ENCODE measurements at regions of chr1 and their contacts with region 1.

Region 1: GRCh38 chr1:199221371-199222150 is 582.7 kb downstream of the PTPRC start:
- DNase-seq: no peak
- H3K4me3 Mint-ChIP-seq: no peak overlapping the region
- H3K27ac Mint-ChIP-seq: no peak overlapping the region
- H3K4me1 Mint-ChIP-seq: peaks cover 9% of the 10 kb centered on the region
- H3K27me3 Mint-ChIP-seq: no peaks in the 10 kb centered on the region

Region 2: DNA sequence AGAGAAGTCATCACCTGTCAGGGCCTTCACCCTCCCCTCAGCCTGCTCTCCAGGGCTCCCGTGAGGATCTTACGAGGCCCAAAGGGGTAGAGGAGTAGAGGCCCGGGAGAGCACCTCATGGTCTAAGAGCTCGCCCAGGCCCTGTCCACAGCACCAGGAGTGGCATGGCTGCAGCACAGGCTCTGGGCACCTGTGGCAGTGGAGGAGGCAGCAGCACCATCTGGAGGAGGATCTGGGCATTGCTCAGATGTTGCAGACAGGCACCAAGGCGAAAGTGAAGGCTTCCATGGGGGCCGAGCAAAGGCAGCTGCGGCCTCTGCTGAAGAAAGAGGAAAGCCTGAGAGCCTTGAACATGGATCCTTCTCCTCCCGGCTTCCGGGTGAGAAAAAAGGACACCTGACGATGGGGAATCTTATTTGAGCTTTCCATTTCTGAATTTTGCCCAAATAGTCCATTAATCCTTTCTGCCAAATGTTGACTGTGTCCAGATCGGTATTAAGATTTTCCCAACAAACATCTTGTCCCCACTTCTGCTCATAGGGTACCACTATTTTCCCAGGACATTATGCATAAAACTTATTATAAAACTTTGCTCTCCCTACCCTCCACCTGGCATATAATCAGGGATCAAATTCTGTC is 22.0 kb after region 1 on chr1:
- CTCF ChIA-PET with region 1: interaction called, 15 read pairs
- DNase-seq: peak; percentile 79
- H3K4me3 Mint-ChIP-seq: no peak overlapping the region
- H3K27ac Mint-ChIP-seq: no peak overlapping the region
- H3K4me1 Mint-ChIP-seq: no peaks in the 10 kb centered on the region
- H3K27me3 Mint-ChIP-seq: peaks cover 11% of the 10 kb centered on the region

Region 3: DNA sequence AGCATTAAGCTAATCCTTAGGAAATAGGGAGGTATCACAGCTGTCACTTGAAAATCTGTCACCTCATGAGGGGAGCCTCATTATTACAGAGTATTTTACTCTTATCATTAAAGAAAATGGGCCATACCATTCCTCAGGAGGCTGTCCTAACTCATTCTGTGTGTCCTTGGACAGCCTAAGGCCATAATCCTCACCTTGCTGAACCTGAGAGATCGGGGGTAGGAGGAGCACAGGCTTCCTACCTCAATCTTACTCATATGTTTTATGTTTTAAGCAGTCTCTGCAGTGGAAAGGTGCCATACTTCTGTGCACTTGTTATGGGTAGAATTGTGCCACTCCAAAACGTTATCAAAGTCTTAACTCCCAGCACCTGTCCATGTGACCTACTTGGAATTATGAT is 39.2 kb after region 1 on chr1:
- CTCF ChIA-PET with region 1: no interaction called
- DNase-seq: no peak
- H3K4me3 Mint-ChIP-seq: no peak overlapping the region
- H3K27ac Mint-ChIP-seq: no peak overlapping the region
- H3K4me1 Mint-ChIP-seq: no peaks in the 10 kb centered on the region
- H3K27me3 Mint-ChIP-seq: peaks cover 10% of the 10 kb centered on the region